Motor neuron (in vitro differentiated cells): ENCODE measurements at regions of chr5 and their contacts with region 1.

Region 1: GRCh38 chr5:96336351-96336985 is 96.6 kb downstream of the PCSK1 start:
- ATAC-seq: peak; percentile 70 to 97 (median 88)
- H3K4me3 ChIP-seq: no peak overlapping the region
- H3K27ac ChIP-seq: no peak overlapping the region
- H3K4me1 ChIP-seq: peaks cover 0 to 3% of the 10 kb centered on the region in 2 donors

Region 2: DNA sequence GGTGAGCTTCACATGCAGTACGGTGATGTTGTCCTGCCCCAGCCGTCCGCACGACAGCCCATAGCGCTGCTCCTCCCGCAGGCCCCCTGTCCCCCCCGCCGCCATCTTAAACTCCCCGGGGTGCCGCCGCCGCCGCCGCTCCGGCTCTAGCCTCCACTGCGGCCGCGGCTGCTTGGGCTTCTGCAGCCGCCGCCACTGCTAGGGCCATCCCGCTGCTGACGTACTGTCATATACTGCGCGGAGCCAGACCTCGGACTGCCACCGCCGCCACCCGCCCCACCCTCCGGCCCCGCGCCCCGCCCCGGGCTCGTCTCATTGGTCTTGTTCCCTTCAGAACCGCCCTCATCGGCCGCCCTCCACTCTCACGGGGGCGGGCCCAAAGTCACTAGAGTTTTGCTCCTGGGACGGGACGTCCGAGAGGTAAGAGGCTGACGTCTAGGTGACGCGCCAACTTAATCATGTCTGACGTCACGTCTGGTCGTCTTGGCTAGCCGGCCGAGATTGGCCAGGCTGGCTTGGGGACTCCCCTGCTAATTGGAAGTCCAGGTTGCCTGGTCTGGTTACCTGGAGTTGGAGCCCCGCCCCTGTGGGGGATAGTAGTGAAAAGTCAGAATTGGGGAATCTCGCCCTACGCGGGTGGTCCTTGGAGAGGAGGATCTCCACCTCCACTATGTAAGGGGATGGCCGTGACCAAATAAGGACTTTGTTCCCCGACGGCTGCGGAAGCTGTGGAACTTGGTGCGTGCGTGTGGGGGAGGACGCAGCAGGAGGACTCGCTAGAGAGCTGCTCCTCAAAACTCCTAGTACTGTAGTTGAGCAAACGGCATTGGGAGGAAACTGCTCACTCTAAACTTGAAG is 374.6 kb before region 1 on chr5 and contains the start of gene ELL2:
- in situ Hi-C with region 1: loop called in 1 of 9 experiments (anchors 25 kb)
- ATAC-seq: peak; percentile 70 to 86 (median 82)
- H3K4me3 ChIP-seq: peak within 1 kb of the TSS; percentile 73 to 99 (median 80)
- H3K27ac ChIP-seq: peak within 1 kb of the TSS; percentile 55 to 69
- H3K4me1 ChIP-seq: peaks cover 8 to 15% of the 10 kb centered on the region in 2 donors
- total RNA-seq, gene ELL2: 3.4 to 46.2 (median 19.2) TPM

Region 3: DNA sequence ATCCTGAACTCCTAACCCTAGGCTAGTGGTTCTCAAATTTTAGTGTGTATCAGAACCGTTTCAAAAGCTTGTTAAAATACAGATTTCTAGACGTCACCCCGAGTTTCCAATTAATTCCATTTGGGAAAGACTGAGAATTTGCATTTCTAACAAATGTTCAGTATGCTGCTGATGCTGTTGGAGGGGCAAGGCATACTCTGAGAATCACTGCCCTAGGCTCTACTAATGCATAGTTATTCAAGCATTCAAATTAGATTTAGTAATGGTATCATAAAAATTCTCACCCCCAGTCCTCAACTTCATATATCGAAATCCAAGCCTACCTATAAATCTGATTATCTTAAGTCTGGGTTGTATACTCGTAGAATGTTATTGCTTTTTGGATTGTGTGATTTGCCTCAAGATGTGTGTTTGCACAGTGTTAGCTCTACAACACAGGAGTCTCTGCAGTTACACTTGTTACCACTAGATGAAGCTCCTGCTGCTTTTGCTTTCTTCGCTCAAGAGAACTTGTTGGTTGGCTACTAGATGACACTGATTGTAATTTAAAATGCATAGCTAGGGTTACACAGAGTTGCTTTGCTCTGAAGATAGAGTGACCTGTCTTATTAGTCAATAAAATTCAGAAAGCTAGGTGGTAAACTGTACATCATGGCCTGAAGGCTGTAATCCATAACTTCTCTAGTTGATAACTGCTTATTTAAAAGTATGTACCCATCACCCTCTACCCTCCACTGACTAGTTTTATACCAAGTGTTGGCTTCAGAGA is 532.3 kb after region 1 on chr5:
- in situ Hi-C with region 1: no loop called
- ATAC-seq: peak in 7 of 8 experiments; percentile 37 to 97 (median 94)
- H3K4me3 ChIP-seq: no peak overlapping the region
- H3K27ac ChIP-seq: no peak overlapping the region
- H3K4me1 ChIP-seq: peaks cover 6 to 8% of the 10 kb centered on the region in 2 donors